Sigmoid colon (tissue), 7 donors: ENCODE measurements at regions of chr5 and their contacts with region 1.

Region 1: DNA sequence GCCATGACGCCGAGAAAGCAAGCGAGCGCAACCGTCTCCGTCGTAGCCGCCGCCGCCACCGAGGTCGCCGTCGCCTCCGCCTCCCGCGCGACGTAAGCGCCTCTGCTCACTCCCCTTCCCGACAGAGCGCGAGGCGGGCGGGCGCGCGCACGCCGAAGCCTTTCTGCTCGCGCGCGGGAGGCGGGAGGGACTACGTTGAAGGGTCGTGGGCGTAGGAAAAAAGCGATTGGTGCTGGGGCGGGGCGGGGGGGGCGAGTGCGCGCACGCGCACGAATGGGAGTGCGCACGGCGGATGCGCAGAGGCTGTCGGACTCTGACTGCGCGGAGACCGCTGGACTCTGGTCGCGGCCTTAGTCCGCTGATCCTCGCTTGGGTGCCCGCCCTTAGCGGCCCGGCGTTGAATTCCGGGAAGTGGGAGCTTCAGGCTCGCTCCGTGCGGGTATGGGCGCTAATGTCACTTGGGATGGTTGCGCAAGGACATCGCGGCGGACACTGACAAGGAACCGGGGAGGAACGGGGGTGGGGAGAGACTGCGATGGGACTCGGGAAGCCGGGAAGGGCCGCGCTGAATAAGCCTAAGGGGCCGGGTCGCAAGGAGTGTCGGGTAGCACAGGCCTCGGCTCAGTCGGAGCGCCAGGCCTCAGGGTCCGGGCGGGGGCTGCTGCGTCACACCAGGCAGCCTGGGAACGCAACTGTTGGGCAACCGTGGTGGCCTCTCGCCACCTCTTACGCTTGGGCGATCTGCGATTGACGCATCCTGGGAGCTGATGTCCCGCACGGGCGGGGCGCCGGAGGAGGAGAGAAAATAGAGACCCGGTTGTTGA is at the start of gene CHD1:
- DNase-seq: peak; percentile 98
- H3K4me3 ChIP-seq: peak within 1 kb of the TSS; percentile 78 to 86 (median 84)
- H3K27ac ChIP-seq: peak within 1 kb of the TSS; percentile 99 to 100 (median 100)
- H3K4me1 ChIP-seq: peaks cover 0 to 44% (median 26%) of the 10 kb centered on the region in 4 donors
- H3K27me3 ChIP-seq: no peaks in the 10 kb centered on the region
- CTCF ChIP-seq: no peak
- EP300 ChIP-seq: peak; percentile 12 to 91 (median 80)
- POLR2A ChIP-seq: peak; percentile 96 to 97
- total RNA-seq, gene CHD1: 38.2 to 73.3 (median 52.4) TPM

Region 2: DNA sequence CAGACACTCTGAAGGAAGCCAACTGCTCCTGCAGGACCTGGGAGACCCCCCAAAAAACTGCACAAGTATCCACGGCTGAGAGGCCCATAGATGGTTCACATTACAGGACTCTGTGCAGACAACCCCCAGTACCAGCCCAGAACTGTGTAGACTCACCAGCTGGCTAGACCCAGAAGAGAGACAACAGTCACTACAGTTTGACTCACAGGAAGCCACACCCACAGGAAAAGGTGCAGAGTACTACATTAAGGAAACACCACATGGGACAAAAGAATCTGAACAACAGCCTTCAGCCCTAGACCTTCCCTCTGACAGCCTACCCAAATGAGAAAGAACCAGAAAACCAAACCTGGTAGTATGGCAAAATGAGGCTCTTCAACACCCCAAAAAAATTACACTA is 436.8 kb before region 1 on chr5:
- intact Hi-C with region 1: no loop called
- DNase-seq: no peak
- H3K4me3 ChIP-seq: no peak overlapping the region
- H3K27ac ChIP-seq: no peak overlapping the region
- H3K4me1 ChIP-seq: no peaks in the 10 kb centered on the region
- H3K27me3 ChIP-seq: no peaks in the 10 kb centered on the region
- CTCF ChIP-seq: no peak
- EP300 ChIP-seq: no peak
- POLR2A ChIP-seq: no peak

Region 3: GRCh38 chr5:98773464-98774191 is 155.5 kb before region 1 on chr5 and contains the start of gene RGMB:
- intact Hi-C with region 1: loop called (anchors 5 kb)
- DNase-seq: peak; percentile 99
- H3K4me3 ChIP-seq: peak within 1 kb of the TSS; percentile 64 to 93 (median 83)
- H3K27ac ChIP-seq: peak within 1 kb of the TSS; percentile 89 to 97 (median 96)
- H3K4me1 ChIP-seq: peaks cover 0 to 48% (median 32%) of the 10 kb centered on the region in 4 donors
- H3K27me3 ChIP-seq: no peaks in the 10 kb centered on the region
- CTCF ChIP-seq: no peak
- EP300 ChIP-seq: no peak
- POLR2A ChIP-seq: peak; percentile 66 to 73
- total RNA-seq, gene RGMB: 23.3 to 32.1 (median 25.0) TPM

Region 4: GRCh38 chr5:99004960-99005359 is 75.9 kb after region 1 on chr5:
- intact Hi-C with region 1: no loop called
- DNase-seq: no peak
- H3K4me3 ChIP-seq: no peak overlapping the region
- H3K27ac ChIP-seq: no peak overlapping the region
- H3K4me1 ChIP-seq: no peaks in the 10 kb centered on the region
- H3K27me3 ChIP-seq: no peaks in the 10 kb centered on the region
- CTCF ChIP-seq: no peak
- EP300 ChIP-seq: no peak
- POLR2A ChIP-seq: no peak